ENCODE measurements at regions of chr1 and their contacts with region 1.

Region 1: GRCh38 chr1:159798893-159799292 is 3.3 kb upstream of the FCRL6 start:
- DNase-seq: peak; percentile 71
- H3K4me3 Mint-ChIP-seq: no peak overlapping the region
- H3K27ac Mint-ChIP-seq: no peak overlapping the region
- H3K4me1 Mint-ChIP-seq: peaks cover 13% of the 10 kb centered on the region
- H3K27me3 Mint-ChIP-seq: no peaks in the 10 kb centered on the region

Region 2: GRCh38 chr1:159214149-159214760 is 584.6 kb before region 1 on chr1:
- CTCF ChIA-PET with region 1: no interaction called
- intact Hi-C with region 1: loop called (anchors 10 kb)
- DNase-seq: peak; percentile 59
- H3K4me3 Mint-ChIP-seq: no peak overlapping the region
- H3K27ac Mint-ChIP-seq: no peak overlapping the region
- H3K4me1 Mint-ChIP-seq: peaks cover 2% of the 10 kb centered on the region
- H3K27me3 Mint-ChIP-seq: peaks cover 48% of the 10 kb centered on the region

Region 3: GRCh38 chr1:159752135-159752580 is 46.7 kb before region 1 on chr1:
- CTCF ChIA-PET with region 1: no interaction called
- intact Hi-C with region 1: no loop called
- DNase-seq: no peak
- H3K4me3 Mint-ChIP-seq: no peak overlapping the region
- H3K27ac Mint-ChIP-seq: no peak overlapping the region
- H3K4me1 Mint-ChIP-seq: no peaks in the 10 kb centered on the region
- H3K27me3 Mint-ChIP-seq: no peaks in the 10 kb centered on the region

Region 4: DNA sequence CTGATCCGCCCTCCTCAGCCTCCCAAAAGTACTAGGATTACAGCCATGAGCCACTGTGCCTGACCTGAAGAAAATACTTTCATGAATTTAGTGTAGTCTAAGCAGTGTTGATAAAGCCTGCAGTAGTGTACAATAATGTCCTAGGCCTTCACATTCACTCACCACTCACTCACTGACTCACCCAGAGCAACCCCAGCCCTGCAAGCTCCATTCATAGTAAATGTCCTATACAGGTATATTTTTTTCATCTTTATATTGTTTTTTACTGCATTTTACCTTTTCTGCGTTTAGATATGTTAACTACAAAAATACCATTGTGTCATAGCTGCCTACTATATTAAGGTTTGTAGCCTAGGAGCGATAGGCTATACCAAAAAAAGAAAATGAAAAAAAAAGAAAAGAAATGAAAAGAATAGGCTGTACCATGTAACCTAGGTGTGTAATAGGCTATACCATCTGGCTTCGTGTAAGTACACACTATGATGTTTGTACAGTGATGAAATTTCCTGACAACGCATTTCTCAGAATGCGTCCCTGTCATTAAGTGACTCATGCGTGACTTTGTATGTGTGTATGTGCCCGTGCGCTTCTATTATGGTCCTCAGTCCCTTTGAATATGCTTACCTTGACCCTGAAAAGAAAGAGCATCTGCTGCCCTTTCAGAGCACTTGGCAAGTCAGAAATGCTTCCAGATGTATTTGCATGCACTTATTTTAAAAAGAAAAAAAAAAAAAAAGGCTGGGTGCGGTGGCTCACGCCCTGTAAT is 18.6 kb after region 1 on chr1:
- CTCF ChIA-PET with region 1: interaction called, 10 read pairs
- intact Hi-C with region 1: no loop called
- DNase-seq: no peak
- H3K4me3 Mint-ChIP-seq: no peak overlapping the region
- H3K27ac Mint-ChIP-seq: no peak overlapping the region
- H3K4me1 Mint-ChIP-seq: peaks cover 11% of the 10 kb centered on the region
- H3K27me3 Mint-ChIP-seq: no peaks in the 10 kb centered on the region

Region 5: DNA sequence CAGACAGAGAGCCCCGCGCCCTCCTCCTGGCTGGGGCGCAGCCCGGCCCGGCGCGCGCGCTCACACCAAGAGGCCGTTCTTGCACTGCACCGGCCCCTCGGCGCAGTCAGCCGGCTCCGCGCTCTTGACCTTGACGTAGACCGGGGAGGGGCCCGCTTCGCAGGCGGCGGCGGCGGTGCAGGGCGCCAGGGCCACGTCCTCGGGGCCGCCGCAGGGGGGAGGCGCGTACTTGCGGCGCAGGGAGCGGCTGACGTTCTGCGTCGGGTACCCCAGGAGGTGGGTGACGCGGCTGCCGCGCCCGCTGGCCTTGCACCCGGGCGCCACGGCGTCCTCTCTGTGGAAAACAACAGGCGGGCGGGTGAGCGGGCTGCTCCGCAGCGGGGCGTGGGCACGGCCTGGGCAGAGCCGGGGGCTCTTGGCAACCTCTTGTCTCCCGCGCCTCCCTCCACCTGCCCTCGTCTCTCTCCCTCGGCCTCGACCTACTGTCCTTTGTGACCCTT is 55.9 kb after region 1 on chr1:
- CTCF ChIA-PET with region 1: interaction called, 17 read pairs
- intact Hi-C with region 1: loop called (anchors 2 kb)
- DNase-seq: peak; percentile 73
- H3K4me3 Mint-ChIP-seq: peak overlapping the region; percentile 81
- H3K27ac Mint-ChIP-seq: no peak overlapping the region
- H3K4me1 Mint-ChIP-seq: peaks cover 10% of the 10 kb centered on the region
- H3K27me3 Mint-ChIP-seq: no peaks in the 10 kb centered on the region

Region 6: GRCh38 chr1:159945483-159946241 is 146.8 kb after region 1 on chr1 and contains the start of gene IGSF9:
- CTCF ChIA-PET with region 1: no interaction called
- intact Hi-C with region 1: loop called (anchors 1 kb)
- DNase-seq: peak; percentile 63
- H3K4me3 Mint-ChIP-seq: peak within 1 kb of the TSS; percentile 45
- H3K27ac Mint-ChIP-seq: no peak within 1 kb of the TSS
- H3K4me1 Mint-ChIP-seq: peaks cover 6% of the 10 kb centered on the region
- H3K27me3 Mint-ChIP-seq: peaks cover 18% of the 10 kb centered on the region
- total RNA-seq, gene IGSF9: not detected

Measured in activated naive CD4-positive, alpha-beta T cell treated with anti-CD3 and anti-CD28 coated beads for 36 hours (primary cell).